ENCODE measurements at regions of chr1 and their contacts with region 1.

Region 1: DNA sequence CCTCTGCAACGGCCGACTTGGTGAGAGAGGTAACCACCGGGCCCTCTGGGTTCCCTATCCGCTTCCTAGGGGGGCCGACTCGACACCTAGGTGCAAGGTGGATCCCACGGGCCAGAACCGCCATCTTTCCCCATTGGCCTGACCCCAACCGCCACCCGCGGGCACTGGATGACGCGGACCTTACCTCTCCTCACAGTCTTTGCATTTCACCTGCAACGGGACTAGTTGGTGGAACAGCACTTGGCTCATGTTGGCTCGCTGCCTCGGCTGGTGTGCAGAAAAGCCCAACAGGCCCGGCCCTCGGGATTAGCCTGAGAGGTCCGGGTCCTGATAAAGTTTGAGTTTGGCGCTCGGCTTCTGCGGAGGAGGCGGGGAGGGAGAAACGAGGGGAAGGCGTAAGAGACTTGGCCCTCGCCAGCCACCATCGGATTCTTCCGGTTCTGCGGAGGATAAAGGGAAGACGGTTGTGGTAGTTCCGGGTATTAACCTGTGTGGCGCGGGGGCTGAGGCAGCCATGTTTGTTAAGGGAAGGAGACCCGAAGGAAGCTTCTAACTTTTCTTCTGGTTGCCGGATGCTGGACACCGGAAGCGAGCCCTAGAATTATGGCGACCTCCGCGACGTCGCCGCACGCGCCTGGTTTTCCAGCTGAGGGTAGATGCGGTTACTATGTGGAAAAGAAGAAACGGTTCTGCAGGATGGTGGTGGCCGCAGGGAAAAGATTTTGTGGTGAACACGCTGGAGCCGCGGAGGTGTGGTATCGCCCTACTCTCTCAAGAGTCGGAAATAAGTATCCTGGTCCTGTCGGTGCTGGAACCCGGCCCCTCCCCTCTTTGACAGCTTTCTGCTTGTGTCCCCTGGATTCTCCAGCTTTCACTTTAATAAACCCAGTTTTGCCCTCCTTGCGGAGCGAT is at the starts of genes SASS6 and TRMT13:
- DNase-seq: peak; percentile 97
- ATAC-seq: peak; percentile 94
- H3K4me3 Mint-ChIP-seq: peak within 1 kb of the TSS; percentile 98
- H3K27ac Mint-ChIP-seq: peak within 1 kb of the TSS; percentile 98
- H3K4me1 Mint-ChIP-seq: peaks cover 32% of the 10 kb centered on the region
- H3K27me3 Mint-ChIP-seq: no peaks in the 10 kb centered on the region
- total RNA-seq, gene SASS6: 14.2 to 17.4 TPM
- total RNA-seq, gene TRMT13: 19.0 to 20.2 TPM

Region 2: DNA sequence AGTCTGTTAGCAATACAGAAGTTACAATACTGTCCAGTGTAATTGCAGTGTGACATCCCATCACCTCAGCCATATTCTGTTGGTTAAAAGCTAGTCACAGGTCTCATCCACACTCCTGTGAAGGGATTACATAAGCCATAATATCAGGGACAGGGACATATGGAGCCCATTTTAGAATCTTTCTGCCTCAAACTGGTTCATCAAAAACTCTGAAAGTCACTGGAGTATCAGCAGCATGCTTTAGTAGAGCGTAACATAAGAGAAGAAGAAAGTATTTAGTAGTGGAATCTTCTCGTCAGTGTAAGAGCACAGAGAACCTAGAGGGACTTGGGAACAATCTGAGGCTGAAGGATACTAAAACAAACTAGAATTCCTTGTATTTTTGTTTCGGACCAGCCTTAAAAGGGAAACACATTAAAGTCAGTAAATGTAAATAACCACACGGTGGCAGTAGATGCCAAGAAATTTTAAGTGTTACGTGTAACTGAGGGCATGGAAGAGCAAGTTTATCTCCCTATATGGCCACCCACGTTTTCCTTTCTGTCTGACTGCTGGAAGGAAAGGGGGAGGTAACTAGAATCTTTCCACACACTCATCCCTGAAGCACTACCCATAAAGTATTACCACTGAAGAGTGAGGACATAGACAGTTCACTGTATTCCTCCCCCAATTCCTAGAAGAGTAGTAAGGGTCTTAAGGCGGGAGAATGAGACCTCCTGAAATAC is 324.3 kb before region 1 on chr1:
- CTCF ChIA-PET with region 1: no interaction called
- POLR2A ChIA-PET with region 1: no interaction called
- intact Hi-C with region 1: loop called (anchors 1 kb)
- DNase-seq: peak; percentile 47
- ATAC-seq: peak; percentile 93
- H3K4me3 Mint-ChIP-seq: no peak overlapping the region
- H3K27ac Mint-ChIP-seq: peak overlapping the region; percentile 75
- H3K4me1 Mint-ChIP-seq: peaks cover 11% of the 10 kb centered on the region
- H3K27me3 Mint-ChIP-seq: peaks cover 9% of the 10 kb centered on the region

Region 3: DNA sequence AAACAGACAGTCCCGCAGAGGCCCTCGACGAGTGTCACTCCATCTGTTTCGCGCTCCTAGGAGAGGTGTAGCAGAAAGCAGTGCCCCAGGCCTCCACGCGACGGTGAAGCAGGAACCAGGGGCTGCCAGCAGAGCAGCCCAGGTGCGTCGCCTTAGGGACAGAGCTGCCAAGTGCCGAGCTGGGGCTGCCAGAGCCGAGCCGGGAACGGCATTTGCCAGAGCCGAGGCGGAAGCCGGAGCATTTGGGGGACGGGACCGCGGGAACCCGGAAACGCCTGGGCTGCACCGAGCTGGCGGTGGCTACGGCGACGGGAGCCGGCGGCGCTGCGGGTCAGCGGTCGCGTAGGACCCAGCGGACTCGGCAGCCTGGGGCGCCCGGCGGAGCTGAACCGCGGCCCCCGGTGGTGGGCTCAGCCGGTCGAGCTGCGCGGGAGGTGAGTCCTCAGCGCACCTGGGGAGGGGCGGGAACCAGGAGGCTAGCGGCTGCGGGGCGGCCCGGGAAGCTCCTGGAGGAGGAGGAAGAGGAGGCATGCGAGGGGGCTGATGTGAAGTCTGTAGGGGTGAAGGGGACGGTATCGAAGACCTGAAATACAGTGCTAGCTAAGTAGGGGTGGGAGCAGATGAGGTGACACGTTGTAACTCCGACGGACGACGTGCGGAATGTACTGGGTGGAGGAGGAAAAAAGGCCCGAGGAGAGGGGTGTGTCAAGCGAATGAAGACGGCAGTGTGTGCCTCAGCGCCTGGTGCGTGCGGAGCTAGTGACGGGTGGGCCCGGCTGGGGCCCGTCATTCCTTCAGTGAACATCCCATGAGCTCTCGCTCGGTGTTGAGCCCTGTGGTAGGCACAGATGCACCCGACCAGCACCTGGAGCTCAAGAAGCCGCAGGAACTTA is 162.8 kb before region 1 on chr1 and contains the start of gene SLC35A3:
- CTCF ChIA-PET with region 1: no interaction called
- POLR2A ChIA-PET with region 1: no interaction called
- intact Hi-C with region 1: loop called (anchors 1 to 2 kb)
- DNase-seq: peak; percentile 89
- ATAC-seq: peak; percentile 89
- H3K4me3 Mint-ChIP-seq: peak within 1 kb of the TSS; percentile 100
- H3K27ac Mint-ChIP-seq: peak within 1 kb of the TSS; percentile 94
- H3K4me1 Mint-ChIP-seq: peaks cover 26% of the 10 kb centered on the region
- H3K27me3 Mint-ChIP-seq: no peaks in the 10 kb centered on the region
- total RNA-seq, gene SLC35A3: 11.2 to 13.4 TPM

Region 4: DNA sequence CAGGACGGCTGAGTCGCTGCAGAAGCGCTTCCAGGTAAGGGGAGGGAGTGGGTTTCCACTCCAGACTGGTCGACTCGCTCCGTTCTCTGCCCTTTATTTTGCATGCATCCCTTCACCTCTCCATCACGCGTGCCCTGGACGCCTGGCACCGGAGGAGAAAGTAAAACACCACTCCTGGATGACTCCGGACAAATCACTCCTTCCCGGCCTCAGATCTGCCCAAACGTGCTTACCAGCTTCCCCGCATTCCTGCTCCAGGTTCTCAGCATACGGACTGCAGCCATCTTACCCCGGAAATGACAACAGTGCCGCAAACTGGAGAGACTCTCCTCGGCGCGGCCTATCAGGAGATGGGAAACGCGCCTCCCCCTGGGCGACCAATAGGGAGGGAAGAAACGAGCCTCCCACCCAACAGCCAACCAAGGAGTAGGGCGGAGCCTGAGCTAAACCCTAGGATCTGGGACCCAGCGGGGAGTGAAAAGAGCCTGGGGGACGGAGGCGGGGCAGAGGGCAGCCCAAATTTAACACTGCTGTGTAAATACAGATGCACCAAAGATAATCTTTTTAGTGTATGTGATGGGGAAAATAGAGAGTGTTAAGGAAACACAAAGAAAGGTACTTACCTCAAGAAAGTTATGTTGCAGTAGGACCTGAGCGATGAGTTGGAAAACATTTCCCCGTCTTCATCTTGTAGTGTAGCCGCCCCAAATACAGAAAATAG is 116.9 kb after region 1 on chr1 and contains the start of gene DBT:
- CTCF ChIA-PET with region 1: interaction called, 3 read pairs
- POLR2A ChIA-PET with region 1: no interaction called
- intact Hi-C with region 1: loop called (anchors 1 kb)
- DNase-seq: peak; percentile 96
- ATAC-seq: peak; percentile 100
- H3K4me3 Mint-ChIP-seq: no peak within 1 kb of the TSS
- H3K27ac Mint-ChIP-seq: no peak within 1 kb of the TSS
- H3K4me1 Mint-ChIP-seq: peaks cover 16% of the 10 kb centered on the region
- H3K27me3 Mint-ChIP-seq: no peaks in the 10 kb centered on the region
- total RNA-seq, gene DBT: 11.0 to 12.8 TPM

Region 5: DNA sequence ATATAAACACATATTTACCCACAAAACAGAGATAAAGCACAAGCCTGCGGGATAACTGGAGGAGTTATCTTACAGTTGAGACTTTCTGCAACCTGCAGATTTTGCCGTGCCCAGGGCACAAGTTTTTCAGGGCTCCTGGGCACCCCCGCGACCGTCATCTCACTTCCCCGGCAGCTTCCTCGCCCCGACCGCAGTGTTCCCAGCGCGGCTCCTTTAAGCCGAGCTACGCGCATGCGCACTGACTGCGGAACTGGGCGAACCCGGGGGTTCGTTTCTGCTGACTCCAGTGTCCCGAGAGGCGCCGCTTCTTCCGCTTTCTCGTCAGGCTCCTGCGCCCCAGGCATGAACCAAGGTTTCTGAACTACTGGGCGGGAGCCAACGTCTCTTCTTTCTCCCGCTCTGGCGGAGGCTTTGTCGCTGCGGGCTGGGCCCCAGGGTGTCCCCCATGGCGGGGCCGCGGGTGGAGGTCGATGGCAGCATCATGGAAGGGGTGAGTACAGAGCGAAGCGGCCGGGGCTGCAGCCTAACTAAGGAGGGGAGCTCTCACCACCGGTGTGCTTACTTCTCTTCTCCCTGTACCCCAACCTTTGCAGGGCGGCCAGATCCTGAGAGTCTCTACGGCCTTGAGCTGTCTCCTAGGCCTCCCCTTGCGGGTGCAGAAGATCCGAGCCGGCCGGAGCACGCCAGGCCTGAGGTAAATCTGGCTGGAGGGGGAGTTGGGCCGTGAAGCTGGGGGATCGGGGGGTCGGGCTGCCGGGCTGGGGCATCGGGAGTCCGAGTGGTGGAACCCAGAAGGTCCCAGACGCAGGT is 133.3 kb after region 1 on chr1 and contains the start of gene RTCA:
- CTCF ChIA-PET with region 1: no interaction called
- POLR2A ChIA-PET with region 1: interaction called, 4 read pairs
- intact Hi-C with region 1: loop called (anchors 1 to 2 kb)
- DNase-seq: peak; percentile 97
- ATAC-seq: peak; percentile 93
- H3K4me3 Mint-ChIP-seq: peak within 1 kb of the TSS; percentile 100
- H3K27ac Mint-ChIP-seq: peak within 1 kb of the TSS; percentile 99
- H3K4me1 Mint-ChIP-seq: peaks cover 32% of the 10 kb centered on the region
- H3K27me3 Mint-ChIP-seq: no peaks in the 10 kb centered on the region
- total RNA-seq, gene RTCA: 47.8 to 53.0 TPM

Measured in activated CD4-positive, alpha-beta T cell treated with anti-CD3 and anti-CD28 coated beads for 36 hours (primary cell).